CD8-positive, alpha-beta T cell (primary cell): ENCODE measurements at regions of chr12 and their contacts with region 1.

Region 1: GRCh38 chr12:12527820-12528296 is 34.8 kb downstream of the DUSP16 start:
- DNase-seq: peak in 2 of 9 experiments; percentile 33 to 55
- ATAC-seq: peak; percentile 61
- H3K4me3 ChIP-seq: no peak overlapping the region
- H3K4me3 Mint-ChIP-seq: peak overlapping the region; percentile 19
- H3K27ac ChIP-seq: peak overlapping the region in 1 of 2 experiments; percentile 42
- H3K27ac Mint-ChIP-seq: peak overlapping the region; percentile 90
- H3K4me1 ChIP-seq: peaks cover 18% of the 10 kb centered on the region
- H3K4me1 Mint-ChIP-seq: peaks cover 46% of the 10 kb centered on the region
- H3K27me3 ChIP-seq: no peaks in the 10 kb centered on the region
- H3K27me3 Mint-ChIP-seq: no peaks in the 10 kb centered on the region
- CTCF ChIP-seq: no peak

Region 2: DNA sequence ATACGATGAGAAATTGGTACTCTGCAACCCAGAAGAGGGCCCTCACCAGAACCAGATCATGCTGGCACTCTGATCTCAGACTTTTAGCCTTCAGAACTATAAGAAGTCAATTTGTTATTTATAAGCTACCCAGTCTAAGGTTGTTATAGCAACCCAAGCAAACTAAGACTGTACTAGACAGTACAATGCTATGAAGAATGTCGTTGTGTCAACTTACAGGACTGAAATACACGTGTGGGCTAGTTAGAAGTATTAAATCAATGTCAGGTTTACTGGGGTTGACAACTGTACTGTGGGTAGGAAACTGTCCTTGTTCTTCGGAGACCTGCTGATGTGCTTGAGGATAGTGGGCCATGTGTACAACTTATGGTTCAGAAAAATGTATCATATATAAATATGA is 15.1 kb after region 1 on chr12:
- CTCF ChIA-PET with region 1: interaction called, 3 read pairs
- POLR2A ChIA-PET with region 1: no interaction called
- intact Hi-C with region 1: loop called in 1 of 2 experiments (anchors 2 kb)
- DNase-seq: no peak
- ATAC-seq: no peak
- H3K4me3 ChIP-seq: no peak overlapping the region
- H3K4me3 Mint-ChIP-seq: no peak overlapping the region
- H3K27ac ChIP-seq: no peak overlapping the region
- H3K27ac Mint-ChIP-seq: no peak overlapping the region
- H3K4me1 ChIP-seq: peaks cover 11% of the 10 kb centered on the region
- H3K4me1 Mint-ChIP-seq: peaks cover 32% of the 10 kb centered on the region
- H3K27me3 ChIP-seq: no peaks in the 10 kb centered on the region
- H3K27me3 Mint-ChIP-seq: no peaks in the 10 kb centered on the region
- CTCF ChIP-seq: no peak

Region 3: GRCh38 chr12:12954356-12954755 is 426.5 kb after region 1 on chr12:
- CTCF ChIA-PET with region 1: no interaction called
- POLR2A ChIA-PET with region 1: no interaction called
- intact Hi-C with region 1: no loop called
- DNase-seq: no peak
- ATAC-seq: no peak
- H3K4me3 ChIP-seq: no peak overlapping the region
- H3K4me3 Mint-ChIP-seq: no peak overlapping the region
- H3K27ac ChIP-seq: no peak overlapping the region
- H3K27ac Mint-ChIP-seq: no peak overlapping the region
- H3K4me1 ChIP-seq: no peaks in the 10 kb centered on the region
- H3K4me1 Mint-ChIP-seq: no peaks in the 10 kb centered on the region
- H3K27me3 ChIP-seq: no peaks in the 10 kb centered on the region
- H3K27me3 Mint-ChIP-seq: peaks cover 3% of the 10 kb centered on the region
- CTCF ChIP-seq: no peak